K562 (cell line): ENCODE measurements at regions of chr10 and their contacts with region 1.

Region 1: DNA sequence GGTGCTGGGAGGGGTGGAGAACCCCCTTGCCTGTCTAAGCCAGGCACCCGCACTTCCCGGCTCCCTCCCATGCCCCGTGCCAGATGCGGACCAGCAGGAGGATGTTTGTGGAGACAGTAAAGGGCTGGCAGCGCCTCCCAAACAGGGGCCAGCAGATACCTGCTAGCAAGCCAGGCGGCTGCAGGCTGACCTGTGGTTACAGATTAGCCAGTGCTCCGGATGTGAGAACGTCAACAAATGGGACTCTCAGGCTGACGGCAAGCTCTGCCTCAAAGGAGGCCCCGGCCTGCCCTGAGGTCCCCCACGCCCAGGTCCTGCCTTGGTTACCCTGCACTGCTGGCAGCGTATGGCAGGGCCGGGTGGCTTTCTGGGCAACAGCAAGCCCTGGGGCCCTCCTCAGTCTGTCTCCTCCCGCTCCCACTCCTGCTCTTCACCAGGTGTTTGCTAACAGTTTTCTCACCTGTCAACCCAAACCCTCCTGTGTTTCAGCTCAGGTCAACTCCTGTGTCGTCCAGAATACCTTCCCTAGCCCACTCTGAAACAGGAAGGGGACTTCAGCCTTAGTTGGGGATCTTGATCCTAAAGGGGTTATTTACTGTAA is 85.4 kb downstream of the NEURL1 start:
- DNase-seq: peak in 3 of 4 experiments; percentile 26 to 78 (median 76)
- ATAC-seq: peak; percentile 90
- H3K4me3 ChIP-seq: no peak overlapping the region
- H3K27ac ChIP-seq: peak overlapping the region; percentile 53
- H3K4me1 ChIP-seq: peaks cover 22 to 32% of the 10 kb centered on the region in 2 experiments
- H3K27me3 ChIP-seq: no peaks in the 10 kb centered on the region
- CTCF ChIP-seq: no peak
- EP300 ChIP-seq: peak; percentile 40; the same call in 1 of the 2 replicates
- POLR2A ChIP-seq: no peak
- RAD21 ChIP-seq: no peak

Region 2: DNA sequence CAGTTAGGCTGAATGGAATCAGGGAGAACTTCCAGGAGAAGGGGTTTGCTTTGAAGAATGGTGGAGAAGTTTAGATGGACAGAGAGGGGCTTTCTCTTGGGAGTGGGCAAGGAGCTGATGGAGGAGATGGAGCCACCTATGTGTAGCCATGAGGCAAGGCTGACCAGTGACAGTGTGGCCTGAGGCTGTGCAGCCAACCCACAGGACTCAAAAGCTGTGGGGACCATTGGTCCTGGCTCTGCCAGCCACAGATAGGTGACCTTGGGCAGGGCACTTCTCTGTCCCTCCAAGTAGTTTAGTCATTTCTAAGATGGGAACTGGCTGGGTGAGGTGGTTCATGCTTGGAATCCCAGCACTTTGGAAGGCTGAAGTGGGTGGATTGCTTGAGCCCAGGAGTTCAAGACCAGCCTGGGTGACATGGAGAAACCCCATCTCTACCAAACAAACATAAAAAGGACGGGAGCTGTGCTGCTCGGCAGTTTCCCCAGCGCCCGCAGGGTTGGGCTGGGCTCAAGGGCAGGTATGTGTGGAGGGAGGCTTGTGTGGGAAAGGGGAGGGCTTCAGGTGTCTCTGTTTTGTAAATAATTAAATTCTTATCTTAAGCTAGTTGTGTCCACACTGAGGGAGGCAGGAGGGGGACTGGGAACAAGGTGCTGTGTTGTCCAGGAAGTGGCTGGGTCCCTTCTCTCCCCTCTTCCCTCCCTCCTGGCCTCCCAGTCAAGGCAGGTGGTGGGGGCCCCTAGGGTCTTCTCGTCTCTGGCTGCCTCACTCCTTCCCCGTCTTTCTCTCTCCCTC is 66.5 kb before region 1 on chr10:
- CTCF ChIA-PET with region 1: no interaction called
- POLR2A ChIA-PET with region 1: no interaction called
- in situ Hi-C with region 1: no loop called
- intact Hi-C with region 1: no loop called
- DNase-seq: no peak
- ATAC-seq: no peak
- H3K4me3 ChIP-seq: no peak overlapping the region
- H3K27ac ChIP-seq: no peak overlapping the region
- H3K4me1 ChIP-seq: peaks cover 0 to 3% of the 10 kb centered on the region in 2 experiments; a peak in 2 of 5 replicates
- H3K27me3 ChIP-seq: peaks cover 3 to 23% of the 10 kb centered on the region in 2 experiments; a peak in 3 of 5 replicates
- CTCF ChIP-seq: no peak
- EP300 ChIP-seq: no peak
- POLR2A ChIP-seq: no peak
- RAD21 ChIP-seq: no peak

Region 3: DNA sequence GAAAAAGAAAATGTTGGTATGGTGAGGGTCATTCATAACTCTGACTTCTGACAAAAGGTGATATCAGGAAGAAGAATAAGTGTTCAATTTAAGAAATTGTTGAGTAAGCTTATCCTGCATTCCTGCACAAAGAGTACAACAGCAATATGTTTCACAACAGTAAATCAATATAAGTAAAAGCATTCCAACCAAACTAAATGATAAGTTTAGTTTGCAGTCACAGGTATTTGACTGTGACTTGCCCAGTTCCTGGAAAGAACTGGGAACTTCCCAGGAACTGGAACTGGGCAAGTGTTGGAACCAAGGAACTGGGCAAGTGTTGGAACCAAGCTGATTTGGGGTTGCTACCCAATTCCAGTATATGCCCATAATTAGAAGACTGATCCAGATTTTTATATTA is 50.3 kb before region 1 on chr10:
- CTCF ChIA-PET with region 1: no interaction called
- POLR2A ChIA-PET with region 1: no interaction called
- in situ Hi-C with region 1: no loop called
- intact Hi-C with region 1: no loop called
- DNase-seq: no peak
- ATAC-seq: no peak
- H3K4me3 ChIP-seq: no peak overlapping the region
- H3K27ac ChIP-seq: no peak overlapping the region
- H3K4me1 ChIP-seq: peaks cover 0 to 4% of the 10 kb centered on the region in 2 experiments; a peak in 1 of 5 replicates
- H3K27me3 ChIP-seq: no peaks in the 10 kb centered on the region
- CTCF ChIP-seq: no peak
- EP300 ChIP-seq: no peak
- POLR2A ChIP-seq: no peak
- RAD21 ChIP-seq: no peak

Region 4: DNA sequence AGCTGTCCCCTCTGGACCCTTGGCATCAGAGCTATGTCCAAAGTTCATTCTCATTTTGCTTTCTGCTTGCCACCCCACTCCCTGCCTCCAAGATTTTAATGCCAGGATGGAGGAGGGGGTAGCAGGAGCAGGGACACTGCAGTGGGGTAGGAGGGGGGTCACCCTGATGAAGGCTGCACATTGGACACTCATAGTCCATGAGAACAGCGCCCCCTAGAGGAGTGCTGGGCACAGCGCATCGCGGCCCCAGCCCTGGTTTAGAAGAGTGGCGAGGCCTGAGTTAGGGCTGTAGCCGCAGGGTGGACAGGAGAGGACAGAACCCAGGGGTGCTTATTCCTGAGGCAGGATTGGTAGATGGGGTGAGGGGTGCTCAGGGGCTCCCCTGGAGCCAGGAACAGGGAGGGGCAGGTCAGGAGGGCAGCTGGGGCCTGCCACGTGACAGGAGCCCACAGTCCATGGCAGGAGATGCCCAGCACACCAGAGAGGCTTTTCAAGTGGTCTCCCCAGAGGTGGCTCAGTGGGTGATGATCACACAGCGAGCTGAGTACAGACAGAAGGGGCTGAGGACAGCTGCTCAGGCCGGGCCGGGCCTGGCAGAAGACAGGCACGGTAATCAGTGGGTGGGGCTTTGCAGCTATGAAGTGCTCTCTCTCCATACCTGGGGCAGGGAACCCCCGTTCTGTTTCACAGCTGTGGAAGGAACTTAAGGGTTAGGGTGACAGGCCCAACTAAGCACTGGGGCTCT is 13.9 kb before region 1 on chr10:
- CTCF ChIA-PET with region 1: no interaction called
- POLR2A ChIA-PET with region 1: interaction called, 10 read pairs
- in situ Hi-C with region 1: no loop called
- intact Hi-C with region 1: no loop called
- DNase-seq: peak; percentile 62 to 70 (median 64)
- ATAC-seq: peak; percentile 96
- H3K4me3 ChIP-seq: no peak overlapping the region
- H3K27ac ChIP-seq: no peak overlapping the region
- H3K4me1 ChIP-seq: peaks cover 0 to 10% of the 10 kb centered on the region in 2 experiments; a peak in 1 of 5 replicates
- H3K27me3 ChIP-seq: peaks cover 0 to 7% of the 10 kb centered on the region in 2 experiments; a peak in 2 of 5 replicates
- CTCF ChIP-seq: peak; percentile 65 to 84 (median 68)
- EP300 ChIP-seq: no peak
- POLR2A ChIP-seq: no peak
- RAD21 ChIP-seq: peak in 1 of 2 experiments; percentile 54; a peak in 2 of 4 replicates

Region 5: DNA sequence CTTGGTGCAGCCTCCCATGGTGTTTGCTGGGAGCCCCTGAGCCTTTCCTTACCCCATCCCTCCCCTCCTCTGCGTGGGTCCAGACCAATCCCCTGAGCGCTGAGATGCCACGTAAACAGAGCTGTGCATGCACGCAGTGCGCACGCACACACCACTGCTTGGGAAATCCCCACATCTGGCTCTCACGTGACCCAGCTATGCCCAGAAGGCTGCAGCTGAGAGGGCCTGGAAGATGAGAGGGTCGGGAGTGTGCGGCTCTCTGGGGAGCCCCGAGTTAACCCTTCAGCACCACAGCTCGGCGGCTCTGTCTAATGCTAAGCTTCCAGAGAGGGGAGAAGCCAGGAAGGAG is 99.3 kb after region 1 on chr10:
- CTCF ChIA-PET with region 1: no interaction called
- POLR2A ChIA-PET with region 1: no interaction called
- in situ Hi-C with region 1: no loop called
- intact Hi-C with region 1: no loop called
- DNase-seq: no peak
- ATAC-seq: no peak
- H3K4me3 ChIP-seq: no peak overlapping the region
- H3K27ac ChIP-seq: no peak overlapping the region
- H3K4me1 ChIP-seq: peaks cover 0 to 10% of the 10 kb centered on the region in 2 experiments; a peak in 3 of 5 replicates
- H3K27me3 ChIP-seq: no peaks in the 10 kb centered on the region
- CTCF ChIP-seq: no peak
- EP300 ChIP-seq: no peak
- POLR2A ChIP-seq: no peak
- RAD21 ChIP-seq: no peak